K562 (cell line): ENCODE measurements at regions of chr7 and their contacts with region 1.

Region 1: DNA sequence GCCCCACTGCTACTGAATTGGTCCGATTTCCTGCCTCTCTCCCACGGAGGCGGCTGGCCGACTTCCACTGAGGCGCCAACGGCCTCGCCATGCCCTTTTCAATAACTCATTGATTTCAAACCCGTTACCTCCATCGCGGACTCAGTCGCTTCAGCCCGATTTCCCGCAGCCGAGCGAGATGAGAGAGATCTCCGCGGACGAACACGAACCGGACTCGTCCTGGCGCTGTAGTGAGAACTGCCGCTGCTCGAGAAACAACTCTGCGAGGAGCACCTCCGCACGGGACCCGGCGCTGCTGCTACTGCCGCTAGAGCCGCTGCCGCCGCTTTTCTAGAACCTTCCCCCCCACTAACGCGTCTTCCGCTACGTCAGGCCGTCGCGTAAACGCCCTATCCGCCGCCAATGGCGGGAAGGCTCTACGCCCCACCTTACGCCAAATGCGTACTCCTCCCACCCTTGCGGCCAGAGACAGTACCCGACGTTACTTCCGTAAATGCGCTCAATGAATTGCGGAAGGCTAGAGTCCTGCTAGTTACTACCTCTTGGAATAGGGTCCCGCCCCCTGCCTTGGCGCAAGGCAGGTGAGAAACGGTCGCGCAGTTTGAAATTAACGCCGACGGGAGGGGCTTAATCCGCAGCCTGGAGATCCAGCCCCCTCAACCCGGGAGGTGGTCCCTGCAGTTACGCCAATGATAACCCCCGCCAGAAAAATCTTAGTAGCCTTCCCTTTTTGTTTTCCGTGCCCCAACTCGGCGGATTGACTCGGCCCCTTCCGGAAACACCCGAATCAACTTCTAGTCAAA is at the start of gene HNRNPA2B1:
- DNase-seq: peak; percentile 63 to 98 (median 74)
- ATAC-seq: peak; percentile 65
- H3K4me3 ChIP-seq: peak within 1 kb of the TSS; percentile 76
- H3K27ac ChIP-seq: peak within 1 kb of the TSS; percentile 97
- H3K4me1 ChIP-seq: peaks cover 0 to 25% of the 10 kb centered on the region in 2 experiments; a peak in 2 of 5 replicates
- H3K27me3 ChIP-seq: no peaks in the 10 kb centered on the region
- CTCF ChIP-seq: no peak; a peak in 1 of 6 replicates
- EP300 ChIP-seq: peak; percentile 9; the same call in 1 of the 2 replicates
- POLR2A ChIP-seq: peak; percentile 100
- RAD21 ChIP-seq: no peak
- polyA plus RNA-seq, gene HNRNPA2B1: 865 to 1,390 TPM

Region 2: DNA sequence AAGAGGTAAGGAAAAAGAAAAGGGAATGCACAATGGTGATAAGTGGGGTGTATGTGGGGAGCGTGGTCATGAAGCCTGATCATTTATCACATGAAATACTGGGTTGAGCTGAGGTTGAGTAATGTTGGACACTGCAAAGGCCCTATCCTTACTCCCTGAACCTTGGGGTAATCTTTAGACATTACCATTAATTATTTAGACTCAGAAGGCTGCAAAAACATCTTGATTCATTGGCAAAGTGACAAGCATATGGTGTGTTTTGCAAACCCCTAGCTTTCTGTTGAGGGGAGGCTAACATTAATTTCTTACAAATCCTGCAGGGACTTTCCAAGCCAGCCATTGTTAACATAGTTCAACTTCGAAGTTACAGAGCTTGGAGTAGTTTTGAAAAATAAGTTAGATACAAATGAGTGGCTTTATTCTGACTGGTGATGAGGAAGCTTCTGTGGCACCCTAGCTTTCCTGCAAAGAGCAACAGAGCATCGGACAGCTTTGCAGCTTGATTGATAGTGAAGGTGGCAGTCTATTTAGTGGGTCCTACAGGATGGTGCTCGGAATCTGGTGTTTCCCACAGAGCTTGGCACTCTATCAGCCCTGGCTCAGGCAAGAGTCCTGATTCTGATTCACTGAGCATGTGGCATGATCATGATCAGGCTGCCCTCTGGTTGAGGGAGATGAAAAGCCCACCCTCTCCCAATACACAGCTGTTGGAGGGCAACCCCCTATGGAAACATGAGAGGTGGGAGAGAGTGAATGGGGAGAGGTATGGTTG is 818.6 kb before region 1 on chr7:
- CTCF ChIA-PET with region 1: no interaction called
- POLR2A ChIA-PET with region 1: no interaction called
- in situ Hi-C with region 1: no loop called
- intact Hi-C with region 1: no loop called
- DNase-seq: no peak
- ATAC-seq: no peak
- H3K4me3 ChIP-seq: no peak overlapping the region
- H3K27ac ChIP-seq: no peak overlapping the region
- H3K4me1 ChIP-seq: no peaks in the 10 kb centered on the region
- H3K27me3 ChIP-seq: peaks cover 5 to 14% of the 10 kb centered on the region in 2 experiments; a peak in 3 of 5 replicates
- CTCF ChIP-seq: no peak
- EP300 ChIP-seq: no peak
- POLR2A ChIP-seq: no peak
- RAD21 ChIP-seq: no peak

Region 3: DNA sequence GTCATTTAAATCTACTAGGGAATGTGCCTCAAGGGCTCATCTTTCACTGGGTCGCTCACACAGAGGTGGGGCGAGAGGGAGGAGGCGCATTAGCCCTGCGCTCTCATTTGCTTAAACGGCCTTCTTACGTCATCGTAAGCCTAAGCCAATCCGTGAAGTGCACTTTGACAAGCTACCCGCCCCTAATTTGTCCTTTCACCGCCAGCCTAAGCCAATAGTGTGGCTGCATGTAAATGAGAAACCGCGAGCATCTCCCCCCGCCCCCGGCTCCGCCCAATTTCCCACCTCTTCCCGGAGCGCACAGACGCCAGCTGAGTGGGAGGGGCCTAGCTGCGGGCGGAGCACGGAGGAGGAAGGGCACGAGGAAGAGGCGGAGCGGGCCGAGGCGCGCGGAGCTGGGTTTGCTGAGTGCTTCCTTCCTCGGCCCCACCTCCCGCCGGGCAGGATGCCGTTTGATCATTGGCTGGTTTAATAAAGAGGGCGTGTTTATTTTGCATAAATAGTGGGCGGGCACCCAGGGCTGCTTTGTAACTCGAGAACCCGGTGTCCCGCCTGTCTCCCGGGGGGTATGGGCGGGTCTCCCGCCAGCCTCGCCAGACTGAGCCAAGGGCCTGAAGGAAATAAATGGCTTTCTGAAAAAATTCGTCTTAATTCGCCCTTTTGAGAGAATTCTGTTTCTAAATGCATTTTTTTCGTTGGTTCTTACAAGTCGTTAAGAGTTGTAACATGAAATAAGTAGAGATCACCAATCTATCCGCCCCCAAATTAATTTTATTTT is 338.2 kb before region 1 on chr7:
- CTCF ChIA-PET with region 1: no interaction called
- POLR2A ChIA-PET with region 1: interaction called, 3 read pairs
- in situ Hi-C with region 1: no loop called
- intact Hi-C with region 1: loop called (anchors 1 kb)
- DNase-seq: peak; percentile 96 to 100 (median 97)
- ATAC-seq: peak; percentile 94
- H3K4me3 ChIP-seq: peak overlapping the region; percentile 41
- H3K27ac ChIP-seq: peak overlapping the region; percentile 71; the same call in 2 of the 3 replicates
- H3K4me1 ChIP-seq: peaks cover 0 to 20% of the 10 kb centered on the region in 2 experiments; a peak in 3 of 5 replicates
- H3K27me3 ChIP-seq: no peaks in the 10 kb centered on the region
- CTCF ChIP-seq: no peak
- EP300 ChIP-seq: 0 out of 2 replicates have a peak, but pooled peaks have one; percentile 5
- POLR2A ChIP-seq: peak; percentile 80
- RAD21 ChIP-seq: no peak

Region 4: DNA sequence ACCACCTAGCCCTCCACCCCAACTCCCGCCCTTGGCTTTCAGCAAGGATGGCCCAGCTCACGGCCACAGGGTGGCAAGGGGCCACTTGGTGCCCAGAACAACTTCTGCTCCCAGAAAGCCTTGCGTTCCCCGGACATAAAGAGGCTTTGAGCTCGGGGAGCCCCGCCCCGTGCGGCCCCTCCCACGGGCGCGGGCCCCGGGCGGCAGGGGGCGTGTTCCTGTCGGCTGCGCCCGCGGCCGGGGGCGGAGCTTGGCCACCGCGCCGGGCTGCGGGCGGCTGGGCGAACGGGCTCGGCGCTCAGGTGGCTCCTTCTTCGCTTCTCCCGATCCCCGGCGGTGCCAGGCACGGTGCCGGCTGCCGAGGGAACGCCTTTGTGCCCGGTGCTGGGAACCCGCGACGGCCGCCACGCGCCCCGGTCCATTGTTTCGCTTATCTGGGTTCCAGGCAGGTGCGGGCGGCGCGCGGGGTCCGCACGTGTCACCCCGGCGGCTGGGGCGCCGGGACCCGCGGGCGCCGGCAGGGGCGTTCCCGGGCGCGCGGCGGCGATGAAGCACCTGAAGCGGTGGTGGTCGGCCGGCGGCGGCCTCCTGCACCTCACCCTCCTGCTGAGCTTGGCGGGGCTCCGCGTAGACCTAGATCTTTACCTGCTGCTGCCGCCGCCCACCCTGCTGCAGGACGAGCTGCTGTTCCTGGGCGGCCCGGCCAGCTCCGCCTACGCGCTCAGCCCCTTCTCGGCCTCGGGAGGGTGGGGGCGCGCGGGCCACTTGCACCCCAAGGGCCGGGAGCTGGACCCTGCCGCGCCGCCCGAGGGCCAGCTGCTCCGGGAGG is 48.5 kb before region 1 on chr7 and contains the start of gene NFE2L3:
- CTCF ChIA-PET with region 1: interaction called, 4 read pairs
- POLR2A ChIA-PET with region 1: interaction called, 10 read pairs
- in situ Hi-C with region 1: no loop called
- intact Hi-C with region 1: no loop called
- DNase-seq: peak; percentile 91 to 96 (median 94)
- ATAC-seq: peak; percentile 90
- H3K4me3 ChIP-seq: peak within 1 kb of the TSS; percentile 75
- H3K27ac ChIP-seq: peak within 1 kb of the TSS; percentile 62; the same call in 2 of the 3 replicates
- H3K4me1 ChIP-seq: peaks cover 31 to 38% of the 10 kb centered on the region in 2 experiments
- H3K27me3 ChIP-seq: no peaks in the 10 kb centered on the region
- CTCF ChIP-seq: peak in 2 of 3 experiments; percentile 13 to 17; a peak in 1 of 6 replicates
- EP300 ChIP-seq: no peak
- POLR2A ChIP-seq: peak; percentile 69
- RAD21 ChIP-seq: no peak
- polyA plus RNA-seq, gene NFE2L3: 2.9 to 4.8 TPM

Region 5: GRCh38 chr7:26216049-26216448 is 15.4 kb after region 1 on chr7:
- CTCF ChIA-PET with region 1: no interaction called
- POLR2A ChIA-PET with region 1: interaction called, 61 read pairs
- in situ Hi-C with region 1: no loop called
- intact Hi-C with region 1: no loop called
- DNase-seq: no peak
- ATAC-seq: no peak
- H3K4me3 ChIP-seq: no peak overlapping the region
- H3K27ac ChIP-seq: no peak overlapping the region
- H3K4me1 ChIP-seq: no peaks in the 10 kb centered on the region; a peak in 2 of 5 replicates
- H3K27me3 ChIP-seq: no peaks in the 10 kb centered on the region
- CTCF ChIP-seq: no peak
- EP300 ChIP-seq: no peak
- POLR2A ChIP-seq: no peak
- RAD21 ChIP-seq: no peak

Region 6: GRCh38 chr7:26284995-26285632 is 84.5 kb after region 1 on chr7:
- CTCF ChIA-PET with region 1: no interaction called
- POLR2A ChIA-PET with region 1: interaction called, 44 read pairs
- in situ Hi-C with region 1: loop called (anchors 5 kb)
- intact Hi-C with region 1: loop called (anchors 2 kb)
- DNase-seq: peak; percentile 31 to 81 (median 58)
- ATAC-seq: peak; percentile 99
- H3K4me3 ChIP-seq: no peak overlapping the region
- H3K27ac ChIP-seq: no peak overlapping the region
- H3K4me1 ChIP-seq: peaks cover 0 to 5% of the 10 kb centered on the region in 2 experiments; a peak in 2 of 5 replicates
- H3K27me3 ChIP-seq: no peaks in the 10 kb centered on the region; a peak in 1 of 5 replicates
- CTCF ChIP-seq: peak; percentile 68 to 88 (median 72)
- EP300 ChIP-seq: no peak
- POLR2A ChIP-seq: no peak
- RAD21 ChIP-seq: peak; percentile 94 to 95

Region 7: GRCh38 chr7:26329520-26330255 is 129.0 kb after region 1 on chr7:
- CTCF ChIA-PET with region 1: no interaction called
- POLR2A ChIA-PET with region 1: no interaction called
- in situ Hi-C with region 1: no loop called
- intact Hi-C with region 1: no loop called
- DNase-seq: peak in 1 of 4 experiments; percentile 23
- ATAC-seq: peak; percentile 84
- H3K4me3 ChIP-seq: no peak overlapping the region
- H3K27ac ChIP-seq: no peak overlapping the region; the same call in 2 of the 3 replicates
- H3K4me1 ChIP-seq: peaks cover 6 to 9% of the 10 kb centered on the region in 2 experiments; a peak in 4 of 5 replicates
- H3K27me3 ChIP-seq: no peaks in the 10 kb centered on the region
- CTCF ChIP-seq: no peak
- EP300 ChIP-seq: no peak
- POLR2A ChIP-seq: no peak
- RAD21 ChIP-seq: no peak